ENCODE measurements at regions of chr1 and their contacts with region 1.

Region 1: GRCh38 chr1:6235296-6235677 is 477 bp downstream of the ICMT start:
- DNase-seq: peak; percentile 46
- ATAC-seq: no peak
- H3K4me3 Mint-ChIP-seq: peak overlapping the region; percentile 91
- H3K27ac Mint-ChIP-seq: peak overlapping the region; percentile 81
- H3K4me1 Mint-ChIP-seq: peaks cover 22% of the 10 kb centered on the region
- H3K27me3 Mint-ChIP-seq: peaks cover 16% of the 10 kb centered on the region
- CTCF ChIP-seq: no peak

Region 2: DNA sequence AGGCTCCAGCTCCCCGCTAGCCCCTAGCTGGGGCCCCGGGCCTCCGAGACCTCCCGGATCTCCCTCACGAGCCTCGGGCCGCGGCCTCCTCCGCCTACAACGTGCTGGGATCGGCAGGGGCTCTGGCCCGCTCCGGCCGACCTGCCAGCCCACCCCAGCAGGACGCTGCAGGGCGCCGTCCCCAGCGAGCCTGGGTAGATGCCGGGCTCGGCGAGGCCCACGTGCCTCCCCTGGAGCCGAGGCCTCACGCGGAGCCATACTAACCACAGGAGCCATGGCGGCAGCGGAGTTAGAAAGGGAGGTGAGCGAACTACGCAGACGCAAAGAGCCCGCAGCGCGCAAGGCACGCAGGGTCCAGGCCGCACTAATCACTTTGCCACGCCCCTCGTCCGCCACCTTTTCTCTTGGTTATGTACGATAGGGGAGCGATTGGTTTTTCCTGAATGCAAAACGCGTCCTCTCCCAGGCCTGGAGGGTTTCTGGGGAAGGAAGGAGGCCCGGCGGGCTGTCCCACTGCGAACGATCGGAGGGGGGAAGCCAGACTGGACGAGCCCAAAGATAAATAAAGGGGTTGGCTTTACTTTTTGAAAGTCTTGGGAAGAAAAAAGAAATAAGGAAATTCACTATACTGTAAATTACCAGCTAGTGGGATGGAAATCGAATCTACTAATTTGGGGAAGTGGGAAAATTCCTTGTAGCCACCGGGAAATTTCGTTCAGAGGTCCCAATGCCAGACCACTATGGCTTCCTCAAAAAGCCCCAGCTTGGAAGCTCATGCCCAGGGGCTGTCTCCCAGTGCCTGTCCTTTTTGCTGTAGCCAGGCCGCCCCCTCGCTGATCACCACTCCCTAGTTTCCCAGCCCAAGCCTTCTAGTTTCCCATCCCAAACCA is 35.7 kb before region 1 on chr1 and contains the start of gene RPL22:
- CTCF ChIA-PET with region 1: interaction called, 11 read pairs
- POLR2A ChIA-PET with region 1: interaction called, 5 read pairs
- intact Hi-C with region 1: no loop called
- DNase-seq: peak; percentile 100
- ATAC-seq: peak; percentile 99
- H3K4me3 Mint-ChIP-seq: peak within 1 kb of the TSS; percentile 94
- H3K27ac Mint-ChIP-seq: peak within 1 kb of the TSS; percentile 90
- H3K4me1 Mint-ChIP-seq: peaks cover 43% of the 10 kb centered on the region
- H3K27me3 Mint-ChIP-seq: peaks cover 2% of the 10 kb centered on the region
- CTCF ChIP-seq: no peak
- total RNA-seq, gene RPL22: 372 to 473 TPM

Region 3: GRCh38 chr1:6205849-6206519 is 29.3 kb before region 1 on chr1 and contains the start of gene RNF207:
- CTCF ChIA-PET with region 1: interaction called, 18 read pairs
- POLR2A ChIA-PET with region 1: interaction called, 5 read pairs
- intact Hi-C with region 1: no loop called
- DNase-seq: peak; percentile 71
- ATAC-seq: peak; percentile 68
- H3K4me3 Mint-ChIP-seq: peak within 1 kb of the TSS; percentile 72
- H3K27ac Mint-ChIP-seq: peak within 1 kb of the TSS; percentile 30
- H3K4me1 Mint-ChIP-seq: peaks cover 17% of the 10 kb centered on the region
- H3K27me3 Mint-ChIP-seq: peaks cover 21% of the 10 kb centered on the region
- CTCF ChIP-seq: no peak
- total RNA-seq, gene RNF207: 4.9 to 9.9 TPM

Region 4: GRCh38 chr1:6475381-6476133 is 240.3 kb after region 1 on chr1:
- CTCF ChIA-PET with region 1: no interaction called
- POLR2A ChIA-PET with region 1: no interaction called
- intact Hi-C with region 1: no loop called
- DNase-seq: peak; percentile 80
- ATAC-seq: peak; percentile 95
- H3K4me3 Mint-ChIP-seq: no peak overlapping the region
- H3K27ac Mint-ChIP-seq: no peak overlapping the region
- H3K4me1 Mint-ChIP-seq: peaks cover 2% of the 10 kb centered on the region
- H3K27me3 Mint-ChIP-seq: no peaks in the 10 kb centered on the region
- CTCF ChIP-seq: peak; percentile 96

Measured in activated CD8-positive, alpha-beta T cell treated with anti-CD3 and anti-CD28 coated beads for 36 hours (primary cell).